Colonic mucosa (tissue), 4 donors: ENCODE measurements at regions of chr18 and their contacts with region 1.

Region 1: GRCh38 chr18:24600076-24600654 is 139.7 kb downstream of the HRH4 start:
- DNase-seq: peak; percentile 23
- H3K4me3 ChIP-seq: no peak overlapping the region
- H3K27ac ChIP-seq: no peak overlapping the region
- H3K4me1 ChIP-seq: no peaks in the 10 kb centered on the region
- H3K27me3 ChIP-seq: no peaks in the 10 kb centered on the region
- CTCF ChIP-seq: peak; percentile 38

Region 2: DNA sequence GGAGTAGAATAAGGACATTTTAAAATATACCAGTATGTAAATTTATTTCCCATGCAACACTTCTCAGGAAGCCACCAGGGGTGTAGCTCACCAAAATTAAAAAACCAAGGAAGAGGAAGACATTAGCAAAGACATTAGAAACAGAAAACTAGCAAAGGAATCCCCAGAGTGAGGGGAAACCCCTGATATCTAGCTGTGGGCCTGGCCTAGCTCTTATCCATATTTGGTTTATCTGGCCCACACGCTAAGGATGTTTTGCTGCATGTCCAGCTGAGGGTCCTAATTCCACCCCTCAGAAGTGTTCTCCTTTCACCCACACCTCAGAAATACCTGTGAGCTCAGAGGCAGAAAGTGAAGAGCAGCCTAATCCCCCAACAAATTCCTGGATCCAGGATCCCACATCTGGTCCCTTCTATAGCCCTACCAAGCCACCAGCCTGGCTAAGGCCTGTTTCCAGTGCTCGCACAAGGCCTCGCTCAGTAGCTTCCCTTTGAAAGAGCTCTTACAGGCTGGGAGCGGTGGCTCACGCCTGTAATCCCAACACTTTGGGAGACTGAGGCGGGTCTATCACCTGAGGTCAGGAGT is 219.9 kb before region 1 on chr18:
- intact Hi-C with region 1: no loop called
- DNase-seq: no peak
- H3K4me3 ChIP-seq: no peak overlapping the region
- H3K27ac ChIP-seq: no peak overlapping the region
- H3K4me1 ChIP-seq: no peaks in the 10 kb centered on the region
- H3K27me3 ChIP-seq: no peaks in the 10 kb centered on the region
- CTCF ChIP-seq: no peak

Region 3: GRCh38 chr18:24397131-24397693 is 203.0 kb before region 1 on chr18:
- intact Hi-C with region 1: no loop called
- DNase-seq: peak; percentile 76
- H3K4me3 ChIP-seq: peak overlapping the region; percentile 71
- H3K27ac ChIP-seq: peak overlapping the region; percentile 76
- H3K4me1 ChIP-seq: no peaks in the 10 kb centered on the region
- H3K27me3 ChIP-seq: no peaks in the 10 kb centered on the region
- CTCF ChIP-seq: no peak

Region 4: DNA sequence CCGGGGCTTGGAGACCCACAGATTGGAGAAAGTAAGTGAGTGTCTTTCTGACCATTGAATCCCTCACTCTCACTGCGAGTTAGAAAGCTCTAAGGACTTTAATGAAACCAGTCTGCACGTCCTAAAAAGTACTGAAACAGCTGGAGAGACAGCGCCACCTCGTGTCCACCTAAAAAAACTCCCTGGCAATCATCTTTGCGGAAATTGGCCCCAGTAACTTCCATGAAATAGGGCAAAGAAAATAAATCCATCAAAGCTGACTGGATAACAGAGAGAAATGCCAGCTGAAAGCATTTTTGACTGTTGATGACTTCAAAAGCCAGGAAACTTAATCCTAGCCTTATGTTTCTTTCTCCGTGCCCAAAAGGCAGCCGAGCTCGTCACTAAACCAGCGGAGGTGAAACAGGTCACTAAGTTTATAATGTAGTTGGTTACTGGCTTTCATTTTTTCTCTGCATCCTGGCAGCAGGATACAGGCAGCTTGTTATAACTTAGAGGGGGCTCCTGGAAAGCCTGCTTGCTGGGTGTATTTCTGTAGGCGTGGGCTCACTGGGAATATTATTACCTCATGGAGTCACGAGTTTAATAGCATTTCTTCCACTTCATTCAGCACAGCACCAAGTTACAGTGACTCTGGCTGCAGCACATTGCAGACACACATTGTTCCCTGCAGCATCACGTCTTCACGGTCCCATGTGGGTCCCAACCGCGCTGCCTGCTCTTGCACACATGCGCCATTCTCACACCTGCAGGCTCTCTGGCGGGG is 126.7 kb after region 1 on chr18:
- intact Hi-C with region 1: loop called (anchors 2 kb)
- DNase-seq: peak; percentile 57
- H3K4me3 ChIP-seq: no peak overlapping the region
- H3K27ac ChIP-seq: no peak overlapping the region
- H3K4me1 ChIP-seq: no peaks in the 10 kb centered on the region
- H3K27me3 ChIP-seq: no peaks in the 10 kb centered on the region
- CTCF ChIP-seq: peak; percentile 79